ENCODE measurements at regions of chr12 and their contacts with region 1.

Region 1: DNA sequence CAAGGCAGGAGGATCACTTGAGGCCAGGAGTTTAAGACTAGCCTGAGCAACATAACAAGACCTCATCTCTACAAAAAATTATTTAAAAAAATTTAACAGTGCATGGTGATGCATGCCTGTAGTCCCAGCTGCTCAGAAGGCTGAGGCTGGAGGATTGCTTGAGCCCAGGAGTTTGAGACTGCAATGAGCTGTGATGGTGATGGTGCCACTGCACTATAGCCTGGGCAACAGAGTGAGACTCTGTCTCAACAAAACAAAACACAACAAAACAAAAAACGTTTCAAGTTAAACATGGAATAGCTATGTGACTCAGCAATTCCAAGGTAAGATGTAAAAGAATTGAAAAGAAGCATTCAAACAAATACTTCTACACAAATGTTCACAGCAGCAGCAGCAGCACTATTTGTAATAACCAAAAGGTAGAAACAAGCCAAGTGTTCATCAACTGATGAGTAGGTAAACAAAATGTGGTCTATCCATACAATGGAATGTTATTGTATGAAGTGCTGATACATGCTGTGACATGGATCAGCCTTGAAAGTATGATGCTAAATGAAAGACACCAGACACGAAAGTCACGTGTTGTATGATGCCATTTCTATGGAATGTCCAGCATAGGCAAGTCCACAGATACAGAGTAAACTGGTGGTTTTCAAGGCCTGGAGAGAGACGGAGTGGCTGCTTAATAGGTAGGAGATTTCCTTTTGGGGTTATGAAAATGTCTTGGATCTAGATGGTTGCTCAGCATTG is 31.4 kb downstream of the CFAP251 start:
- DNase-seq: no peak
- ATAC-seq: no peak
- H3K4me3 ChIP-seq: no peak overlapping the region
- H3K27ac ChIP-seq: no peak overlapping the region
- H3K4me1 ChIP-seq: no peaks in the 10 kb centered on the region
- H3K27me3 ChIP-seq: no peaks in the 10 kb centered on the region
- CTCF ChIP-seq: no peak
- POLR2A ChIP-seq: no peak

Region 2: GRCh38 chr12:120618954-120619615 is 1330.7 kb before region 1 on chr12:
- in situ Hi-C with region 1: no loop called
- intact Hi-C with region 1: loop called (anchors 5 kb)
- DNase-seq: no peak
- ATAC-seq: no peak
- H3K4me3 ChIP-seq: no peak overlapping the region
- H3K27ac ChIP-seq: no peak overlapping the region
- H3K4me1 ChIP-seq: no peaks in the 10 kb centered on the region
- H3K27me3 ChIP-seq: peaks cover 0 to 12% (median 0%) of the 10 kb centered on the region in 3 donors
- CTCF ChIP-seq: no peak
- POLR2A ChIP-seq: no peak

Measured in gastrocnemius medialis (tissue), 4 donors.